MCF 10A (cell line): ENCODE measurements at regions of chr3 and their contacts with region 1.

Region 1: DNA sequence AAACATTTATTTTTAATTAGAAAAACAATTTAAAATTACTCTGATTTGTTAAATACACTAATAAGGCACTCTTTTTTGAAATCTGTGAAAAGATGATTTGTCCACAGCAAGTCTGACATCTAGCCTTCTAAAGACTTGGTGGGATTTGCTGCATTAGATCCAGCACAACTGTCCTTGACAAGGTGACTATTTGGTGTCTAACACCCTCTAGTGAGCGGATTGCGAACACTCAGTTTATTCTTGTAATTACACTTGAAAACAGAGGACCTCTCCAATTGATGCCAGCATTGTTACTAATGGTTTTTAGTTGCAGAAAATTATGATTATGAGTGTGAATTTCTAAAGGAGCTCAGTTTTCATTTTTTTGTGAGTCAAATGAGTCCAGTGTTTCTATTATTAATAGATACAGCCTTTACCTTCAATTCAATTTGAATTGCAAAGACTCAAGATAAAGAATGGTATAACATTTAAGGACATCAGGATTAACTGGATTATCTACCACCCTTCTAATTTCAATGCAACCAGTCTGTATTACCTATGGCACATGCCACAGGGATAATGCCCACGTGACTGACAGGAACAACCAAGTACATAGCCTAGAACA is 29.7 kb upstream of the STRIT1 start:
- DNase-seq: peak; percentile 83
- H3K4me3 Mint-ChIP-seq: no peak overlapping the region
- H3K27ac Mint-ChIP-seq: no peak overlapping the region
- H3K4me1 Mint-ChIP-seq: no peaks in the 10 kb centered on the region
- H3K27me3 Mint-ChIP-seq: no peaks in the 10 kb centered on the region
- CTCF ChIP-seq: peak; percentile 80

Region 2: GRCh38 chr3:154758109-154758868 is 564.9 kb before region 1 on chr3:
- CTCF ChIA-PET with region 1: interaction called, 113 read pairs
- POLR2A ChIA-PET with region 1: interaction called, 3 read pairs
- intact Hi-C with region 1: loop called (anchors 1 kb)
- DNase-seq: peak; percentile 37
- H3K4me3 Mint-ChIP-seq: no peak overlapping the region
- H3K27ac Mint-ChIP-seq: no peak overlapping the region
- H3K4me1 Mint-ChIP-seq: peaks cover 5% of the 10 kb centered on the region
- H3K27me3 Mint-ChIP-seq: no peaks in the 10 kb centered on the region
- CTCF ChIP-seq: peak; percentile 40

Region 3: GRCh38 chr3:154943981-154944380 is 379.2 kb before region 1 on chr3:
- CTCF ChIA-PET with region 1: interaction called, 11 read pairs
- POLR2A ChIA-PET with region 1: no interaction called
- intact Hi-C with region 1: no loop called
- DNase-seq: no peak
- H3K4me3 Mint-ChIP-seq: no peak overlapping the region
- H3K27ac Mint-ChIP-seq: peak overlapping the region; percentile 34
- H3K4me1 Mint-ChIP-seq: no peaks in the 10 kb centered on the region
- H3K27me3 Mint-ChIP-seq: no peaks in the 10 kb centered on the region
- CTCF ChIP-seq: no peak

Region 4: DNA sequence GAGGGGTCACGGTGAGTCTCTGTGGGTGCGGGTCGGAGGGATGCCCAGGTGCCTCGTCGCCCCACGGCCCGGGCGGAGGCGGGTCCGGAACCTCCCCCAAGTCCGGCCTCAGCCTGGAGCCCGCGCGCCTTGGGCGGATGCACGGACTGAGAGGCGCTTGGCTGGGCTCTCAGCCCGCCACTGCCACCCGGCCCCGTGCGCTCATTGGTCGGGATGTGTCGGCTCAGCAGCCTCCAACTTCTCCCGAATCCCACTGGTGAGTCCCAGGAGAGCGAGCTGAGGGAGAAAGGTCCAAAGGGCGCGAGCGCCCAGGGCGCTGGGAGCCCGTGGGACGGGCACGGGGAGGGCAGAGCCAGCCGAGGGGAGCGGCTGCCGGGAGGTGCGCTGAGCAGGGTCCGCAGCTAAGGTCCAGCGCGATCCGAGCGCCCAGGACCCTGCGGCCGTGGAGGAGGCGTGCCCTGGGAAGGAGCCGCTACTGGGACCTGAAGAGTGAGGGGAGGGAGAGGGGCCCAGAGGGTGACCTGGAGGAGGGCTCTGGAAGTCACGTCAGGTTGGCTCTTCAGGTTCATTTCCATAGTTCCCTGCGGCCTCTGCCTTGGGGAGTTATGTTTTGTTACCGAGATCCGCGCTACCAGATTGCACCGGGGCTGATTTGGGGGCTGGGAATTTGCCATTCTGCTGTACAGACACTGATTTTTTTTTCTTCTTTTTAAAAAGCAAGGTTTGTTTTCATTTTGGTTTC is 243.2 kb before region 1 on chr3 and contains the start of gene MME:
- CTCF ChIA-PET with region 1: no interaction called
- POLR2A ChIA-PET with region 1: interaction called, 6 read pairs
- intact Hi-C with region 1: loop called (anchors 5 kb)
- DNase-seq: peak; percentile 71
- H3K4me3 Mint-ChIP-seq: peak within 1 kb of the TSS; percentile 92
- H3K27ac Mint-ChIP-seq: peak within 1 kb of the TSS; percentile 84
- H3K4me1 Mint-ChIP-seq: peaks cover 35% of the 10 kb centered on the region
- H3K27me3 Mint-ChIP-seq: no peaks in the 10 kb centered on the region
- CTCF ChIP-seq: no peak
- total RNA-seq, gene MME: 26.3 and 37.0 TPM in 2 replicates

Region 5: GRCh38 chr3:155334914-155335723 is 12.0 kb after region 1 on chr3:
- CTCF ChIA-PET with region 1: interaction called, 13 read pairs
- POLR2A ChIA-PET with region 1: no interaction called
- intact Hi-C with region 1: no loop called
- DNase-seq: no peak
- H3K4me3 Mint-ChIP-seq: no peak overlapping the region
- H3K27ac Mint-ChIP-seq: no peak overlapping the region
- H3K4me1 Mint-ChIP-seq: no peaks in the 10 kb centered on the region
- H3K27me3 Mint-ChIP-seq: no peaks in the 10 kb centered on the region
- CTCF ChIP-seq: no peak

Region 6: GRCh38 chr3:155441026-155441425 is 117.9 kb after region 1 on chr3:
- CTCF ChIA-PET with region 1: no interaction called
- POLR2A ChIA-PET with region 1: no interaction called
- intact Hi-C with region 1: no loop called
- DNase-seq: no peak
- H3K4me3 Mint-ChIP-seq: no peak overlapping the region
- H3K27ac Mint-ChIP-seq: no peak overlapping the region
- H3K4me1 Mint-ChIP-seq: no peaks in the 10 kb centered on the region
- H3K27me3 Mint-ChIP-seq: no peaks in the 10 kb centered on the region
- CTCF ChIP-seq: no peak

Region 7: GRCh38 chr3:155605571-155605970 is 282.4 kb after region 1 on chr3:
- CTCF ChIA-PET with region 1: no interaction called
- POLR2A ChIA-PET with region 1: no interaction called
- intact Hi-C with region 1: no loop called
- DNase-seq: no peak
- H3K4me3 Mint-ChIP-seq: no peak overlapping the region
- H3K27ac Mint-ChIP-seq: no peak overlapping the region
- H3K4me1 Mint-ChIP-seq: no peaks in the 10 kb centered on the region
- H3K27me3 Mint-ChIP-seq: no peaks in the 10 kb centered on the region
- CTCF ChIP-seq: no peak